CD8-positive, alpha-beta T cell (primary cell): ENCODE measurements at regions of chr17 and their contacts with region 1.

Region 1: GRCh38 chr17:51260125-51260880 is at the start of gene UTP18:
- DNase-seq: peak; percentile 91 to 99 (median 97)
- ATAC-seq: peak; percentile 87
- H3K4me3 ChIP-seq: peak within 1 kb of the TSS; percentile 76 to 87
- H3K4me3 Mint-ChIP-seq: peak within 1 kb of the TSS; percentile 97
- H3K27ac ChIP-seq: peak within 1 kb of the TSS; percentile 97 to 98
- H3K27ac Mint-ChIP-seq: peak within 1 kb of the TSS; percentile 98
- H3K4me1 ChIP-seq: peaks cover 46% of the 10 kb centered on the region
- H3K4me1 Mint-ChIP-seq: peaks cover 67% of the 10 kb centered on the region
- H3K27me3 ChIP-seq: no peaks in the 10 kb centered on the region
- H3K27me3 Mint-ChIP-seq: no peaks in the 10 kb centered on the region
- CTCF ChIP-seq: no peak
- total RNA-seq, gene UTP18: 53.5 to 59.8 TPM

Region 2: DNA sequence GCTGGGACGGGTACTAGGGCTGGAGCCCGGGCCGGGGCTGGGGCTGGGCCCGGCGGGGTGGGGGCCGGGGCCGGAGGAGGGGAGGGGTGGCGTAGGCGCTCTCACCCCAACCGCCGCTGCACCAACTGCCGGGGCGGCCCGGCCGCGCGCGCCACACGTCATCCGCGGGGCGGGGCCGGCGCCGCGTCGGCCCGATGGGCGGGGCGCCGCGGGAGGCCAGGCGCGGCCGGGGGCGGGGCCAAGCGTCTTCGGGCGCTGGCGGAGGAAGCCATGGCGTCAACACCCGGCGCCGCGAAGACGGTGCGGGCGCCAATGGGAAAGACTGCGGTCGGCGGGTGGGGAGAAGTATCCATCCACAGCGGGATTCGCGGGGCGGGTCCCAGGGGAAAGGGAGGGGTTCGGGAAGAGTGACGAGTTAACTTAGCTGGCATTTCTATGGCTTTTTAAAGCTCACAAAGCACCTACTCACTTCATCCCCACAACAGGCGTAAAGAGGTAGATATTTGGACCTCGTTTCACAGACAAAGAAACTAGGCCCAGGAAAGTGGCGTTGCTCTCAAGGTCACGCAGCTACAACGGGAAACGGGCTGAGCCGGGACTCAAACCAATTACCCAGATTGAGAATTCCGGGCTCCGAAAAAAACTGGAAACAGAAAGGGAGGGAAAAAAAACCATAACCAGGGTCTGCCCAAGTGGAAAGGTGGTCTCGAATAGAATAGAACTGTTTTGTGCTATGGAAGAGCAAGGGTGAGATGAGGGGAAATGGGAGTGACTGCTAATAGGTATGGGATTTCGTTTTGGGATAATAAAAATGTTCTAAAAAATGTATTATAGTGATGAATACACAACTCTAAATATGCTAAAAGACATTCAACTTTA is 139.3 kb before region 1 on chr17 and contains the start of gene SPAG9:
- CTCF ChIA-PET with region 1: no interaction called
- POLR2A ChIA-PET with region 1: interaction called, 4 read pairs
- intact Hi-C with region 1: loop called (anchors 1 to 2 kb)
- DNase-seq: peak; percentile 79 to 96 (median 88)
- ATAC-seq: peak; percentile 84
- H3K4me3 ChIP-seq: peak within 1 kb of the TSS; percentile 96
- H3K4me3 Mint-ChIP-seq: peak within 1 kb of the TSS; percentile 94
- H3K27ac ChIP-seq: peak within 1 kb of the TSS; percentile 95
- H3K27ac Mint-ChIP-seq: peak within 1 kb of the TSS; percentile 98
- H3K4me1 ChIP-seq: peaks cover 38% of the 10 kb centered on the region
- H3K4me1 Mint-ChIP-seq: peaks cover 49% of the 10 kb centered on the region
- H3K27me3 ChIP-seq: no peaks in the 10 kb centered on the region
- H3K27me3 Mint-ChIP-seq: no peaks in the 10 kb centered on the region
- CTCF ChIP-seq: no peak
- total RNA-seq, gene SPAG9: 75.7 to 77.6 TPM

Region 3: GRCh38 chr17:51166197-51166986 is 93.9 kb before region 1 on chr17 and contains the start of gene NME2:
- CTCF ChIA-PET with region 1: no interaction called
- POLR2A ChIA-PET with region 1: no interaction called
- intact Hi-C with region 1: loop called (anchors 1 to 5 kb)
- DNase-seq: peak; percentile 10 to 84 (median 59)
- ATAC-seq: peak; percentile 69
- H3K4me3 ChIP-seq: peak within 1 kb of the TSS; percentile 70 to 78
- H3K4me3 Mint-ChIP-seq: peak within 1 kb of the TSS; percentile 90
- H3K27ac ChIP-seq: peak within 1 kb of the TSS; percentile 52 to 84
- H3K27ac Mint-ChIP-seq: peak within 1 kb of the TSS; percentile 91
- H3K4me1 ChIP-seq: peaks cover 13% of the 10 kb centered on the region
- H3K4me1 Mint-ChIP-seq: peaks cover 23% of the 10 kb centered on the region
- H3K27me3 ChIP-seq: no peaks in the 10 kb centered on the region
- H3K27me3 Mint-ChIP-seq: no peaks in the 10 kb centered on the region
- CTCF ChIP-seq: no peak
- total RNA-seq, gene NME2: 165 to 168 TPM

Region 4: DNA sequence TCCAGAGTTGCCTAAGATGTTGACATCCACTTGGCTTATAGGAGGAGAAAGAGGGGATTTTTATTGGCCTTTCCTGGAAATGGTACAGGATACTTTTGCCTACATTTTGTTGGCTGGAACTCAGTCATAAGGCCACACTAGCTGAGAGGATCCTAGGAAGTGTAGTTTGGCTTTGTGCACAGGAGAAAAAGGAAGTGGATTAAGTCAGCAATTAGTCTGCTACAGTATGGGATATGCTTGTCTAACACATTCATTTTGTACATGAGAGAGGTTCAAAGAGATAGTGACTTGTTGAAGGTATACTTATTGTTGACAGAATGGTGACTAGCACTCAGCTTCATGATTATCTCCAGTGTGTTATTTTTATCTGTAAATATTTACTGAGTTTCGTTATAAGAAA is 10.3 kb after region 1 on chr17:
- CTCF ChIA-PET with region 1: interaction called, 3 read pairs
- POLR2A ChIA-PET with region 1: interaction called, 10 read pairs
- intact Hi-C with region 1: no loop called
- DNase-seq: no peak
- ATAC-seq: no peak
- H3K4me3 ChIP-seq: no peak overlapping the region
- H3K4me3 Mint-ChIP-seq: no peak overlapping the region
- H3K27ac ChIP-seq: no peak overlapping the region
- H3K27ac Mint-ChIP-seq: no peak overlapping the region
- H3K4me1 ChIP-seq: peaks cover 5% of the 10 kb centered on the region
- H3K4me1 Mint-ChIP-seq: peaks cover 55% of the 10 kb centered on the region
- H3K27me3 ChIP-seq: no peaks in the 10 kb centered on the region
- H3K27me3 Mint-ChIP-seq: no peaks in the 10 kb centered on the region
- CTCF ChIP-seq: no peak